ENCODE measurements at regions of chr2 and their contacts with region 1.

Region 1: DNA sequence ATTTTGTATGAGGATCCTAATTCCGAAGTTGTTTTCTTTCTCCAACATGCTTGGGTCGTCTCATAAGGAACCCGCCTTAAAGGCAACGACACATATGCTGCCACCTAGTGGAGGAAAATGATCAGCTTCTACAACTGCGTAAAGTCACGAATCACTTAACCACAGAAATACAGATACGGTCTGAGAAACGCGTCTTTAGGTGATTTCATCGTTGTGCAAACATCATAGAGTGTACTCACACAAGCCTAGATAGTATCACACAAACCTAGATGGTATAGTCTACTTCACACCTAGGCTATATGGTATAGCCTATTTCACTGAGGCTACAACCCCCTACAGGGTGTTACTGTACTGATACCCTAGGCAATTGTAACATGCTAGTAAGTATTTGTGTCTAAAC is 13.1 kb downstream of the GNLY start:
- DNase-seq: peak; percentile 75
- ATAC-seq: peak; percentile 79
- H3K4me3 ChIP-seq: no peak overlapping the region
- H3K27ac ChIP-seq: no peak overlapping the region
- H3K4me1 ChIP-seq: peaks cover 21% of the 10 kb centered on the region
- H3K27me3 ChIP-seq: no peaks in the 10 kb centered on the region
- CTCF ChIP-seq: peak; percentile 74 to 83 (median 82)
- EP300 ChIP-seq: 0 out of 4 replicates have a peak, but pooled peaks of 1 of the 2 experiments have one; percentile 34
- POLR2A ChIP-seq: no peak
- RAD21 ChIP-seq: peak; percentile 77

Region 2: GRCh38 chr2:84832772-84833461 is 874.4 kb before region 1 on chr2:
- CTCF ChIA-PET with region 1: no interaction called
- POLR2A ChIA-PET with region 1: no interaction called
- RAD21 ChIA-PET with region 1: no interaction called
- SMC1A ChIA-PET with region 1: no interaction called
- in situ Hi-C with region 1: no loop called
- intact Hi-C with region 1: no loop called
- DNase-seq: peak; percentile 13
- ATAC-seq: peak; percentile 84
- H3K4me3 ChIP-seq: 0 out of 2 replicates have a peak overlapping the region, but pooled peaks have one; percentile 36
- H3K27ac ChIP-seq: no peak overlapping the region
- H3K4me1 ChIP-seq: peaks cover 6% of the 10 kb centered on the region
- H3K27me3 ChIP-seq: no peaks in the 10 kb centered on the region
- CTCF ChIP-seq: no peak
- EP300 ChIP-seq: no peak
- POLR2A ChIP-seq: no peak
- RAD21 ChIP-seq: no peak

Region 3: GRCh38 chr2:85648619-85649018 is 58.7 kb before region 1 on chr2:
- CTCF ChIA-PET with region 1: interaction called, 15 read pairs
- POLR2A ChIA-PET with region 1: no interaction called
- RAD21 ChIA-PET with region 1: interaction called, 5 read pairs
- SMC1A ChIA-PET with region 1: interaction called, 3 read pairs
- in situ Hi-C with region 1: no loop called
- intact Hi-C with region 1: no loop called
- DNase-seq: no peak
- ATAC-seq: peak; percentile 83
- H3K4me3 ChIP-seq: no peak overlapping the region
- H3K27ac ChIP-seq: no peak overlapping the region
- H3K4me1 ChIP-seq: peaks cover 13% of the 10 kb centered on the region
- H3K27me3 ChIP-seq: no peaks in the 10 kb centered on the region
- CTCF ChIP-seq: peak; percentile 28 to 52 (median 49); a peak in 5 of 6 replicates
- EP300 ChIP-seq: no peak
- POLR2A ChIP-seq: no peak
- RAD21 ChIP-seq: peak; percentile 33

Region 4: GRCh38 chr2:85678794-85679672 is 28.3 kb before region 1 on chr2:
- CTCF ChIA-PET with region 1: interaction called, 194 read pairs
- POLR2A ChIA-PET with region 1: interaction called, 4 read pairs
- RAD21 ChIA-PET with region 1: interaction called, 94 read pairs
- SMC1A ChIA-PET with region 1: interaction called, 75 read pairs
- in situ Hi-C with region 1: no loop called
- intact Hi-C with region 1: loop called (anchors 1 kb)
- DNase-seq: no peak
- ATAC-seq: peak; percentile 99
- H3K4me3 ChIP-seq: no peak overlapping the region
- H3K27ac ChIP-seq: no peak overlapping the region
- H3K4me1 ChIP-seq: no peaks in the 10 kb centered on the region
- H3K27me3 ChIP-seq: no peaks in the 10 kb centered on the region
- CTCF ChIP-seq: peak; percentile 96 to 99 (median 99)
- EP300 ChIP-seq: no peak
- POLR2A ChIP-seq: no peak
- RAD21 ChIP-seq: peak; percentile 89

Region 5: DNA sequence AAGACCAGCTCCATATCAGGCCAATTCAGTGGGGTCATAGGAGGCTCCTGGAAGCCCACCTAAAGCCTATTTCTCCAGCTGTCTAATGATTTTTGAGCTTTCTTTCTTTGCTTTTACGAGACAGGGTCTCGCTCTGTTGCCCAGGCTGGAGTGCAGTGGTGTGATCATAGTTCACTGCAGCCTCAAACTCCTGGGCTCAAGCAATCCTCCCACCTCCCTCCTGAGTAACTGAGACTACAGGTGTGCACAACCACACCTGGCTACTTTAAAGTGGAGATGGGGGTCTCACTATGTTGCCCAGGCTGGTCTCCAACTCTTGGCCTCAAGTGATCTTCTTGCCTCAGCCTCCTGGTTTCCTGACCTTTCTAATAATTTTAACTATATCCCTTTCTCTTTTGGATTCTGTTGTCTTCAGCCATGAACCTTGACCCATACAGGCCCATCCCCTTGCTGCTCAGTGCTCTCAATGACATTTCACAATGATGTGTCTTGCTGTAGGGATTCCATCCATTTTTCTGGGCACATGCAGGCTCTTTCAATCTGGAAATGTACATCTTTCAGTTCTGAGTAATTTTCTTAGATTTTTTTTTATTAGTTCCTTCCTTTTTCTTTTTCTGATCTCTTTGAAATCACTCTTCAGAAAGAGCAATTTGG is 16.5 kb after region 1 on chr2:
- CTCF ChIA-PET with region 1: interaction called, 64 read pairs
- POLR2A ChIA-PET with region 1: interaction called, 3 read pairs
- RAD21 ChIA-PET with region 1: interaction called, 12 read pairs
- SMC1A ChIA-PET with region 1: interaction called, 22 read pairs
- in situ Hi-C with region 1: no loop called
- intact Hi-C with region 1: no loop called
- DNase-seq: no peak
- ATAC-seq: no peak
- H3K4me3 ChIP-seq: no peak overlapping the region
- H3K27ac ChIP-seq: no peak overlapping the region
- H3K4me1 ChIP-seq: no peaks in the 10 kb centered on the region
- H3K27me3 ChIP-seq: peaks cover 0 to 2% of the 10 kb centered on the region in 2 experiments; a peak in 1 of 4 replicates
- CTCF ChIP-seq: no peak
- EP300 ChIP-seq: no peak
- POLR2A ChIP-seq: no peak
- RAD21 ChIP-seq: no peak

Measured in GM12878 (cell line).